ENCODE measurements at regions of chr19 and their contacts with region 1.

Region 1: DNA sequence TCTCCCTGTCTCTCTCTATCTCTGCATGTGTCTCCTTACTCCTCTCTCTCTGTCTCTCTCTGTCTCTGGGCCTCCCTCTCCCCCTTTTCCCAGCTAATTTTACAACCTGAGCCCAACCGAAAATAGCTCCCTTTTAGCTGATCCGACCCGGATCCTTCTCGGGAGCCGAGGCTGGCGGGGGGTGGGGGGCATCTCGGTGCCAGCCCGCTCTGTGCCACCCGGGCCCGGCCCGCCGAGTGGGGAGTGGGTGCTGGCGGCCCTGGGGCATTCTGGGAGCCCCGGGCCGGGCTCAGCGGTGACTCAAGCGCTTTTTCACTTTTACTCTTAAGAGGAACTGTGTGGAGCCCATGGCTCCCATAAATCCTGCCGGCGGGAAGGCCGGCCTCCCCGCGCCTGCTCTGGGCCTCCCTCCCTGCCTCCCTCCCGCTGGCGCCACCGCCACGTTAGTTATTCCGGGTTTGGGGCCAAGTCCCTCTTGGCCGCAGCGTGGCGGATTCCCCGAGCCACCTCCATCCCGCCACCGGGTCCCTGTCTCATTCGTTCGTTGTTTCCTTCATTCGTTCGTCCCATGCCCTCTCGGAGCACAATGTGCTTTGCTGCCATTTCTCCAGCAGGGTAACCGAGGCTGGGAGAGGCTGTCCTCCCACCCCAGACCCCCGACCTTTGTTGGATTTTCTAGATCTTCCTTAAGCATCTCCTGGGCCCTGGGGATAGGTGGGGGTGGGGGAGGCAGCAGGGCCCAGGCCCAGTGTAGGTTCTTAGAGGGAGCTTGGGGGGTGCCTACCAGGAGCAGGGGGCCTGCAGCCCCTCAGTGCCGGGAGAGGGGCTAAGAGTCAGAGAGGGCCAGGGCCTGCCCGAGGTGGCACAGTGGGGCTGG is 3.2 kb downstream of the NFIC start:
- DNase-seq: peak; percentile 63
- ATAC-seq: peak; percentile 31
- H3K4me3 ChIP-seq: peak overlapping the region; percentile 89
- H3K27ac ChIP-seq: peak overlapping the region; percentile 97
- H3K4me1 ChIP-seq: peaks cover 40% of the 10 kb centered on the region
- H3K27me3 ChIP-seq: no peaks in the 10 kb centered on the region
- CTCF ChIP-seq: no peak
- POLR2A ChIP-seq: peak; percentile 39; the same call in 1 of the 2 replicates
- RAD21 ChIP-seq: no peak

Region 2: DNA sequence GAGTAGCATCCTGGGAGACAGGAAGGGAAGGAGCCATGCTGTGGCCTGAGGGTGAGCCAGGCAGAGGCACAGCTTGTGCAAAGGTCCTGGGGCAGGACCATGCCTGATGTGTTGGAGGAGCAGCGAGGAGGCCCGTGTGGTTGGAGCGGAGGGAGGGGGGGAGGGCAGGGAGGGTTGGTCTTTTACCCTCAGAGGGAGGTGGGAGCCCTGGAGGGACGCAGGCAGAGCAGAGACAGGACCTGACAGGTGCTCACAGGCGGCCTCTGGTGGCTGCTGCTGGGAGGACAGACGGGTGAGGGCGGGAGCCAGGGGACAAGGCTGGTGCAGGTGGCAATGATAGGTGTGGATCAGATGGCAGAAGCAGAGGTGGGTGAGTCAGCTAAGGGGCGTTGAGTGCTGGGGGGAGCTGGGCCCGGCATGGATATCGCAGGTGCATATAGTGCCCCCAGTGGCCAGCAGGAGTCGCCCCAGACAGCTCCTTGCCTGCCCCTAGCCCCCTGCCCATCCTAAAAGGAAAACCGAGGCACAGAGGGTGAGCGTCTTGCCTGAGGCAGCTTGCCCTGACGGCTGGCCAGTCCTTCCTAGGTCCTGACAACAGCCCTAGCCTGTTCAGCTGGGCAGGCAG is 243.6 kb before region 1 on chr19:
- CTCF ChIA-PET with region 1: no interaction called
- POLR2A ChIA-PET with region 1: no interaction called
- dilution Hi-C with region 1: no loop called
- in situ Hi-C with region 1: no loop called
- intact Hi-C with region 1: no loop called
- DNase-seq: no peak
- ATAC-seq: peak; percentile 88
- H3K4me3 ChIP-seq: no peak overlapping the region
- H3K27ac ChIP-seq: no peak overlapping the region
- H3K4me1 ChIP-seq: no peaks in the 10 kb centered on the region
- H3K27me3 ChIP-seq: no peaks in the 10 kb centered on the region
- CTCF ChIP-seq: peak; percentile 53
- POLR2A ChIP-seq: no peak
- RAD21 ChIP-seq: peak; percentile 38; the same call in 1 of the 2 replicates

Region 3: DNA sequence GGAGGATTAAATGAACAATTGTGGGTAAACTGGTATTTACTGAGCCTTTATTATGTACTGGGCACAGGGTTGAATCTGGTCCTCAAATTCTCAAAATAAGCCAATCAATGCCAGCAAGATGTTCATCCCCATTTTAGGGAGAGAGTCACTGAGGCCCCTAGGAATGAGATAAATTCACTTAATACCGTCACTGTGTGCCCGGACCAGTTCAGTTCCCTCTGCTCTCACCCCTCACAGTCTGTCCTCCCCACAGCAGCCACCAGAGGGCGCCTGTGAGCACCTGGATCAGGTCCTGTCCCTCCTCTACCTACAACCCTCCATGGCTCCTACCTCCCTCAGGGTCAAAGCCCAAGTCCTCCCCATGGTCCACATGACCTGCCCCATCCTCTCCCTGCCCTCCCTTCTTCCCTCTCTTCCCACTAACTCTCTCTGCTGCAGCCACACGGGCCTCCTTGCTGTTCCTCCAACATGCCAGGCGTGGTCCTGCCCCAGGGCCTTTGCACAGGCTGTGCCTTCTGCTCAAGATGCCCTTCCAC is 45.2 kb before region 1 on chr19:
- CTCF ChIA-PET with region 1: no interaction called
- POLR2A ChIA-PET with region 1: no interaction called
- dilution Hi-C with region 1: no loop called
- in situ Hi-C with region 1: no loop called
- intact Hi-C with region 1: no loop called
- DNase-seq: no peak
- ATAC-seq: peak; percentile 51; the same call in 1 of the 2 replicates
- H3K4me3 ChIP-seq: no peak overlapping the region
- H3K27ac ChIP-seq: no peak overlapping the region
- H3K4me1 ChIP-seq: no peaks in the 10 kb centered on the region
- H3K27me3 ChIP-seq: peaks cover 7% of the 10 kb centered on the region; the same call in 1 of the 2 replicates
- CTCF ChIP-seq: peak; percentile 57
- POLR2A ChIP-seq: no peak
- RAD21 ChIP-seq: peak; percentile 49

Region 4: DNA sequence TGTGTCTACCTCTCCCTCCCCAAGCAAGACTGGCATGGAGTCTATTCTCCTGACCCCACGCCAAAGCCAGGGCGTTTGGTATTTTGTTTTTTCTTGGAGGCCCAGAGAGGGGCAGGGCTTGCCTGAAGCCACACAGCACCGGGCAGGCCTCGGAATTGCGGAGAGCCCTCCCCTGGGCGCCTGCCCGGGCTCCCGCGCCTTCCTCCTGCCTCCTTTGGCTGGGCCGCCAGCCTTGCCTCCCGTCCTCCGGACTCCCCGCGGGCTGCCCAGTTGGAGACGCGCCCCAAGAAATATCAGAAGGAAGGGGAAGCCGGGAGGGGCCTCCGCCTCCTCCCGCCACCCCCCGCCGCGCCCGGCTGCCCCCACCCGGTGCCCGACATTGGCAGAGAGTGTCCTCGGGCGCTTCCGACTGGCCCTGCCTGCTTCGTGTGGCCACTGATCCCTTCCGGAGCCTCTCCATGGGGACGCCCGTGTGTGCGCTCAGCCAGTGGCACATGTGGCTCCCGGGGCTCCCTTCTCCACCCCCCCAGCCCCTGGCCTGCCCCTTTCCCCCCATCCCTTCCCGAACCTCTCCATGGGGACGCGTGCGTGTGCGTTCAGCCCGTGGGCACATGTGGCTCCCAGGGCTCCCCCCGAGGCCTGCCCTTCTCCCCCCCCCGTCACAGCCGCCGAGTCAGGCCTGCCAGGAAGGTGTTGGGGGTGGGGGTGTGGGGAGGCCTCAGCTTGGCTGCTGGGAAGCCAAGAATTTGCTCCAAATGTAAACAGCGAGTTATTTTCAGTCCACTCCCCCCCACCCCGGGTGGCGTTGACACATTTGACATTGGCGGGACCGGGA is 34.1 kb after region 1 on chr19:
- CTCF ChIA-PET with region 1: no interaction called
- POLR2A ChIA-PET with region 1: no interaction called
- dilution Hi-C with region 1: no loop called
- in situ Hi-C with region 1: no loop called
- intact Hi-C with region 1: loop called (anchors 2 kb)
- DNase-seq: peak; percentile 97
- ATAC-seq: peak; percentile 80
- H3K4me3 ChIP-seq: no peak overlapping the region
- H3K27ac ChIP-seq: peak overlapping the region; percentile 96
- H3K4me1 ChIP-seq: peaks cover 22% of the 10 kb centered on the region
- H3K27me3 ChIP-seq: no peaks in the 10 kb centered on the region
- CTCF ChIP-seq: no peak
- POLR2A ChIP-seq: 0 out of 2 replicates have a peak, but pooled peaks have one; percentile 48
- RAD21 ChIP-seq: no peak

Region 5: GRCh38 chr19:3572132-3572854 is 202.7 kb after region 1 on chr19:
- CTCF ChIA-PET with region 1: no interaction called
- POLR2A ChIA-PET with region 1: no interaction called
- dilution Hi-C with region 1: no loop called
- in situ Hi-C with region 1: no loop called
- intact Hi-C with region 1: no loop called
- DNase-seq: peak; percentile 99
- ATAC-seq: peak; percentile 93
- H3K4me3 ChIP-seq: peak overlapping the region; percentile 53
- H3K27ac ChIP-seq: peak overlapping the region; percentile 16
- H3K4me1 ChIP-seq: no peaks in the 10 kb centered on the region
- H3K27me3 ChIP-seq: no peaks in the 10 kb centered on the region
- CTCF ChIP-seq: no peak
- POLR2A ChIP-seq: no peak
- RAD21 ChIP-seq: no peak

Region 6: GRCh38 chr19:3618144-3618810 is 248.7 kb after region 1 on chr19:
- CTCF ChIA-PET with region 1: no interaction called
- POLR2A ChIA-PET with region 1: no interaction called
- dilution Hi-C with region 1: no loop called
- in situ Hi-C with region 1: no loop called
- intact Hi-C with region 1: no loop called
- DNase-seq: peak; percentile 29
- ATAC-seq: peak; percentile 95
- H3K4me3 ChIP-seq: no peak overlapping the region
- H3K27ac ChIP-seq: no peak overlapping the region
- H3K4me1 ChIP-seq: peaks cover 3% of the 10 kb centered on the region; the same call in 1 of the 2 replicates
- H3K27me3 ChIP-seq: no peaks in the 10 kb centered on the region
- CTCF ChIP-seq: peak; percentile 84
- POLR2A ChIP-seq: no peak
- RAD21 ChIP-seq: peak; percentile 80